ENCODE measurements at regions of chr1 and their contacts with region 1.

Region 1: GRCh38 chr1:45326627-45327623 is at the start of gene HPDL:
- DNase-seq: peak in 1 of 2 experiments; percentile 47
- H3K4me3 ChIP-seq: peak within 1 kb of the TSS; percentile 85
- H3K27ac ChIP-seq: peak within 1 kb of the TSS; percentile 77
- H3K4me1 ChIP-seq: peaks cover 41% of the 10 kb centered on the region
- H3K27me3 ChIP-seq: no peaks in the 10 kb centered on the region
- CTCF ChIP-seq: no peak
- total RNA-seq, gene HPDL: 10.4 and 12.7 TPM in 2 replicates

Region 2: DNA sequence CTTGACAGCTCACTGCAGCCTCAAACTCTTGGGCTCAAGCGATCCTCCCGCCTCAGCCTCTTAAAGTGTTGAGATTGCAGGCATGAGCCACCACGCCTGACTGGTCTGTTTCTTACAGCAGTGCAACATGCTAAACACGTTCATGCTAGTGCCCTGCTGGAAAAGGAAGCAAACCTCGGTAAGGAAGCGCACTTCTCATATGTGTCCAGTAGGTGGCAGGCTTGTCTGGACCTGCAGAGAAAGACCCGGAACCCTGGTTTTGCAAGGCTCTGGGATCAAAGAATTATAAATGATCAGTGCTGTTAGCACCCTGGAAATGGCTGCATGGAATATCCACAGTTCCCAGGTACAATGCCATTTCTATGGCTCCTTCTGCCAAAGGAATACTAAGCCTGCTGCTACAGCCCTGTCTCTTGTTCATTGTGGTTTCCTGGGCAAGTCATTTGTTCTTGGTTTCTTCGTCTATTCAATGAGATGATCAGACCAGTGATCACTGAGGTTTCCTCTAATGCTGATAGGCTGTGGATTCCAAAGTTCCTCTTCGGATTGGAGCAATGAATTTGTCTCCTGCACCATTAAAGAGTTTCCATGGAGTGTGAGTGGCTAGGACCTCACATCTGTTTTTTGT is 611.9 kb before region 1 on chr1:
- CTCF ChIA-PET with region 1: interaction called, 16 read pairs
- POLR2A ChIA-PET with region 1: no interaction called
- intact Hi-C with region 1: no loop called
- DNase-seq: peak; percentile 64 to 69
- H3K4me3 ChIP-seq: no peak overlapping the region
- H3K27ac ChIP-seq: no peak overlapping the region
- H3K4me1 ChIP-seq: peaks cover 21% of the 10 kb centered on the region
- H3K27me3 ChIP-seq: no peaks in the 10 kb centered on the region
- CTCF ChIP-seq: peak; percentile 91

Region 3: DNA sequence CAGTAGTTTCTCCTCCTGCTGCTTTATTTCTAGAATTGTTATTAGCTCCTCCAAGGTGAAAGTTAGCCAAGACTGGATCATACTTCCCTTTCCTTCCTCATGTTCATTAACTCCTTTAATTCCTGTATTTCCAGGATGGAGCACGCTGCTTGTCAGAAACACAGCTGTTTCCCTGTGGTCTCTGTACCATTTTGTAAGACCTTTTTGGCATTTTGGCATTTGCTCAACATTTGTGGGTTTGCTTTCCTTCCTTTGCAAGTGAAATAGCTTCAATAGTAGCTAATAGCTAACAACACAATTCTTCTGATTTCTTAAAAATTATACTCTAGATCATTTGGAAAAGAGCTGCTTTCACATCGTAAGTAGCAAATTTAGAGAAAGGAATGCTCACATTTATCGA is 44.6 kb before region 1 on chr1:
- CTCF ChIA-PET with region 1: no interaction called
- POLR2A ChIA-PET with region 1: no interaction called
- intact Hi-C with region 1: no loop called
- DNase-seq: no peak
- H3K4me3 ChIP-seq: no peak overlapping the region
- H3K27ac ChIP-seq: no peak overlapping the region
- H3K4me1 ChIP-seq: no peaks in the 10 kb centered on the region
- H3K27me3 ChIP-seq: no peaks in the 10 kb centered on the region
- CTCF ChIP-seq: no peak

Region 4: DNA sequence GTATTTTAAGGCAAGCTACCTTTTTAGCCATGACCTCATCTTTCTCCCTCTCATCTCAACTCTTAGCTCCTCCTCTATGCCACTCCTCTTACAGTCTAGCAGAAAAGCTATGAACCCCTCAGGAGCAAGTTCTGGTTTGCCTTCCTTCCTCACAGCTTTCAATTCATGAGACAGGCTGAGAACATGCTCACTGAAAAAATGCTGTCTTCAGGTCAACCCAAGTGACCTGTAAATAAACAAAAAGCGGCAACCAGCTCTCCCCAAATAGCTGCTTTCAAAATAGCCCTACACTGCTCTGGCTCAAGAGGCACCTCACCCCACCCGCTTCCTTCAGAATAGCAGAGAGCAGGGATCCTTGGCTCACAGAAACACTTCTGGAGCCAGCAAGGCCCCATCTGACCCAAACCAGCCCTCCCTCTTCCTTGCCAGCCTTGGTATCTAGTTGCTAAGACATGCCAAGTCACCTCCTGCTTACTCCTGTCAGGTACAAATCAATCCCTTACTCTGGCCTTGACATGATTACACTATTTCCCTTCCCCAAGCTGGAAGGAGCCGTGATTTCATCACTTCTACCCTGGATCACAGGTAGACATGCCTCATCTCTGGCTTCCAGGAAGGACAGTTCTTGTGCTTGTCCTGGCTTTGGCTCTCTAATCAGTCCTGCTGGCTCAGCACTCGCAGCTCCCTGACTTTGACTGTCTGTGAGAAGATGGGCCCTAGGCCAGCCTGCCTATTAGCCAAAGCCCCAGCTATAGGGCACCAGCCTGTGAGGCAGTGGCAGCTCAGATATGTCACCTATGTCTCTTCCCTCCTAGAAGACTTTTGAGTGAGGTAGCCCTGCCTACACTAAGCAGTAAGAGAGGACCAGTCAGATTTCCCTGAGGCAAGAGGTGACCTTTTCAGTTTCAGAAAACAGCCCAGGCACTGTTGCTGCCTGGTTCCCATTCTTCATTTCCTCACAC is 22.1 kb after region 1 on chr1:
- CTCF ChIA-PET with region 1: interaction called, 7 read pairs
- POLR2A ChIA-PET with region 1: interaction called, 14 read pairs
- intact Hi-C with region 1: no loop called
- DNase-seq: peak in 1 of 2 experiments; percentile 50
- H3K4me3 ChIP-seq: no peak overlapping the region
- H3K27ac ChIP-seq: peak overlapping the region; percentile 4; the same call in 1 of the 2 replicates
- H3K4me1 ChIP-seq: peaks cover 22% of the 10 kb centered on the region
- H3K27me3 ChIP-seq: no peaks in the 10 kb centered on the region
- CTCF ChIP-seq: no peak

Region 5: GRCh38 chr1:46003315-46003714 is 676.4 kb after region 1 on chr1:
- CTCF ChIA-PET with region 1: no interaction called
- POLR2A ChIA-PET with region 1: no interaction called
- intact Hi-C with region 1: no loop called
- DNase-seq: no peak
- H3K4me3 ChIP-seq: no peak overlapping the region
- H3K27ac ChIP-seq: no peak overlapping the region
- H3K4me1 ChIP-seq: no peaks in the 10 kb centered on the region
- H3K27me3 ChIP-seq: no peaks in the 10 kb centered on the region
- CTCF ChIP-seq: no peak